ENCODE measurements at regions of chr5 and their contacts with region 1.

Region 1: DNA sequence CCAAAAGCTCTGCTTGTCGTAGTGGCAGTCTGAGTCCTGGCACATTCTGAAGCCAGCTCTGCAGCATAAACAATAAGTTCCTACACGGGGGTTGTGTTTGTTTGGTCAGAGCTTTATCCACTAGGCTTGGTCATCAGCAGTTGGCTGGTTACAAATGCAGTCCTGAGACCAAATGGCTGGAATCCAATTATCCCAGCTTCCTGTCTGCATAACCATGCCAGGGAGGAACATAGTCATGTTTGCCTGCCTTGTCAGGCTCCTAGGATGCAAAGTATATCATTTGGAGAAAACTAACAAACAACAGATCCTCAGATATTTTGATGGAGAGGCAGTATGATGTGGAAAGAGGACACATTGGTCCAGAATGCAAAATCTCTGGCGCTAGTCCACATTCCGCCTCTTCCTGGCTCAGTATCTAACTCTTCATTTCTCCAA is 85.8 kb downstream of the FBXO38 start:
- DNase-seq: peak; percentile 92
- H3K4me3 ChIP-seq: no peak overlapping the region
- H3K27ac ChIP-seq: peak overlapping the region; percentile 82
- H3K4me1 ChIP-seq: peaks cover 55% of the 10 kb centered on the region
- H3K27me3 ChIP-seq: no peaks in the 10 kb centered on the region
- CTCF ChIP-seq: no peak
- POLR2A ChIP-seq: no peak

Region 2: GRCh38 chr5:148224131-148224742 is 245.3 kb before region 1 on chr5:
- CTCF ChIA-PET with region 1: no interaction called
- POLR2A ChIA-PET with region 1: no interaction called
- dilution Hi-C with region 1: no loop called
- intact Hi-C with region 1: no loop called
- DNase-seq: no peak
- H3K4me3 ChIP-seq: no peak overlapping the region
- H3K27ac ChIP-seq: no peak overlapping the region
- H3K4me1 ChIP-seq: no peaks in the 10 kb centered on the region
- H3K27me3 ChIP-seq: no peaks in the 10 kb centered on the region
- CTCF ChIP-seq: no peak
- POLR2A ChIP-seq: no peak

Region 3: DNA sequence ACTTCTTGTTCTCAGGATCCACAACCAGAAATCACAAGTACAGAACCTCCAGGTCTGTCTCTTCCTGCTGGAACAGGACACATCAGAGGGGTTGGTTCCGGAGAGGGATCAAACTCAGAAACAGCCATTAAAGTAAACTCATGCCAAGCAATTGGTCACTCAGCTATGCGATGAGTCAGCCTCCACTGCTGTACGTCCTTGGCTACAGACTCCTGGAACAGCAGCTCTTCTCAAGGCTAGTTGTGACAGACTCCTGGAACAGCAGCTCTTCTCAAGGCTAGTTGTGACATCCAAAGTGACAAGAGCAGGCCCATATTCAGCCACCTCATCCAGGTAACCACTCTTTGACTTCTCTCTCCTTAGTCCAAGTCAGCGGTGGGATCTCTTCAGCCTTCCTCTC is 201.0 kb before region 1 on chr5 and contains the start of gene SPINK13:
- CTCF ChIA-PET with region 1: no interaction called
- POLR2A ChIA-PET with region 1: no interaction called
- dilution Hi-C with region 1: no loop called
- intact Hi-C with region 1: no loop called
- DNase-seq: peak; percentile 27
- H3K4me3 ChIP-seq: no peak within 1 kb of the TSS
- H3K27ac ChIP-seq: no peak within 1 kb of the TSS
- H3K4me1 ChIP-seq: no peaks in the 10 kb centered on the region
- H3K27me3 ChIP-seq: no peaks in the 10 kb centered on the region
- CTCF ChIP-seq: no peak
- POLR2A ChIP-seq: no peak
- total RNA-seq, gene SPINK13: not detected in 2 replicates

Region 4: DNA sequence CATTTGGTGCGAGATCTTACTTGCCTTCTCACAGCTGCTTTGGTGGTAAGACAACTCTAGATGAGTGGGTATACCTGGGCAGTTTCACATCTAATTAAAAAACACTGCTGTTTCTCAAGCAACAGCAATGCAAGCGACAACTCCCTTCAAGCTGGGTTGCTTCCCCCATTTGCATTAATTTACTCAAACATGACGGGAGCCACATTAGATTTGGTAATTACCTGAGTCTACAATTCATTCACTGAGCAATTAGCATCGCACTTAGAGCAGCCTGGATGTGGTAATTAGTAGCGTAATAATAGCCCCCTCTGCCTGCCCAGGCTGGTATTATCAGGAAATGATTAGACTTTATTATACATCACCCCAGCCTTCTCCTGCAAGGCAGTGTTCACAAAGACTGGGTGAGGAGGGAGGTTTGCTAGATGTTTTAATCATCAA is 12.3 kb before region 1 on chr5:
- CTCF ChIA-PET with region 1: interaction called, 6 read pairs
- POLR2A ChIA-PET with region 1: no interaction called
- dilution Hi-C with region 1: no loop called
- intact Hi-C with region 1: loop called (anchors 2 kb)
- DNase-seq: peak; percentile 34
- H3K4me3 ChIP-seq: no peak overlapping the region
- H3K27ac ChIP-seq: no peak overlapping the region
- H3K4me1 ChIP-seq: no peaks in the 10 kb centered on the region
- H3K27me3 ChIP-seq: no peaks in the 10 kb centered on the region
- CTCF ChIP-seq: peak; percentile 21 to 39
- POLR2A ChIP-seq: no peak

Region 5: GRCh38 chr5:148620696-148621095 is 151.2 kb after region 1 on chr5:
- CTCF ChIA-PET with region 1: no interaction called
- POLR2A ChIA-PET with region 1: no interaction called
- dilution Hi-C with region 1: no loop called
- intact Hi-C with region 1: loop called (anchors 5 kb)
- DNase-seq: peak; percentile 13
- H3K4me3 ChIP-seq: no peak overlapping the region
- H3K27ac ChIP-seq: no peak overlapping the region
- H3K4me1 ChIP-seq: peaks cover 37% of the 10 kb centered on the region
- H3K27me3 ChIP-seq: no peaks in the 10 kb centered on the region
- CTCF ChIP-seq: no peak
- POLR2A ChIP-seq: no peak